ENCODE measurements at regions of chr2 and their contacts with region 1.

Region 1: GRCh38 chr2:233857511-233858141 is 3.3 kb upstream of the HJURP start:
- DNase-seq: peak; percentile 71
- ATAC-seq: no peak
- H3K4me3 Mint-ChIP-seq: no peak overlapping the region
- H3K27ac Mint-ChIP-seq: no peak overlapping the region
- H3K4me1 Mint-ChIP-seq: peaks cover 30% of the 10 kb centered on the region
- H3K27me3 Mint-ChIP-seq: peaks cover 7% of the 10 kb centered on the region

Region 2: GRCh38 chr2:233841183-233841582 is 16.4 kb before region 1 on chr2:
- CTCF ChIA-PET with region 1: interaction called, 11 read pairs
- POLR2A ChIA-PET with region 1: interaction called, 6 read pairs
- DNase-seq: no peak
- ATAC-seq: no peak
- H3K4me3 Mint-ChIP-seq: no peak overlapping the region
- H3K27ac Mint-ChIP-seq: no peak overlapping the region
- H3K4me1 Mint-ChIP-seq: peaks cover 54% of the 10 kb centered on the region
- H3K27me3 Mint-ChIP-seq: no peaks in the 10 kb centered on the region

Region 3: GRCh38 chr2:233867993-233868532 is 10.4 kb after region 1 on chr2 and contains the start of gene MSL3B:
- CTCF ChIA-PET with region 1: interaction called, 22 read pairs
- POLR2A ChIA-PET with region 1: interaction called, 8 read pairs
- DNase-seq: peak; percentile 63
- ATAC-seq: peak; percentile 94
- H3K4me3 Mint-ChIP-seq: peak within 1 kb of the TSS; percentile 87
- H3K27ac Mint-ChIP-seq: peak within 1 kb of the TSS; percentile 90
- H3K4me1 Mint-ChIP-seq: peaks cover 29% of the 10 kb centered on the region
- H3K27me3 Mint-ChIP-seq: peaks cover 11% of the 10 kb centered on the region

Region 4: GRCh38 chr2:234091432-234091879 is 233.8 kb after region 1 on chr2:
- CTCF ChIA-PET with region 1: no interaction called
- POLR2A ChIA-PET with region 1: no interaction called
- DNase-seq: no peak
- ATAC-seq: no peak
- H3K4me3 Mint-ChIP-seq: no peak overlapping the region
- H3K27ac Mint-ChIP-seq: no peak overlapping the region
- H3K4me1 Mint-ChIP-seq: peaks cover 5% of the 10 kb centered on the region
- H3K27me3 Mint-ChIP-seq: peaks cover 5% of the 10 kb centered on the region